CD8-positive, alpha-beta T cell (primary cell): ENCODE measurements at regions of chr9 and their contacts with region 1.

Region 1: DNA sequence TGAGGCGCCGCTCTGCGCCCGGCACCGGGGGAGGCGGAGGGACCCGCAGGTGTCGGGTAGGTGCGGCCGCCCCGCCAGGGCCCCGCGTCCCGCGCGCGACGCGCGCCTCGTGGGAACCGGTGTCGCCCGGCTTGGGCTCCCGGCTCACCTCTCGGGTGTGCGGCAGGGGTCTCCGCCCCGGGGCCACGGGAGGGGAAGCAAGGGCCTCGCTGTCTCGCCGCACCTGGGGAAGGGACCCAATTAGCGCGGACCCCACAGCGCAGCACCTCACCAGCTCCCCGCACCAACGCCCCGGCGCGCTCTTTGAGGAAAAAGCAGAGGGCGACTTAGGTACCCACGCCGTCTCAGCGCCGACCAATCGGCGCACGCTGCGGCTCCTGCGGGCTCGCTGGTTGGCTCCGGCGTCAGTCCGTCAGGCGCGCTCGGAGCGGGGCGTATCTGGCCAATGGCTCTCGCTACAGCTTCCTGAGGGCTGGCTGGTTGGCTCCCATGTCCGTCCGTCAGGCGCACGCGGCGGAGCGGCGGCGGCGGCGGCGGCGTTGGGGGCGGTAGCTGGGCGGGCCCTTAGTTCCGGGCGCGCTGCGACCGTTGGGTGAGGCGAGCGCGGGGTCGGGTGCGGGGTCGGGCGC is at the start of gene TRAF2:
- DNase-seq: peak; percentile 94 to 100 (median 97)
- ATAC-seq: peak; percentile 88
- H3K4me3 ChIP-seq: peak within 1 kb of the TSS; percentile 83 to 85
- H3K4me3 Mint-ChIP-seq: peak within 1 kb of the TSS; percentile 83
- H3K27ac ChIP-seq: peak within 1 kb of the TSS; percentile 53 to 92
- H3K27ac Mint-ChIP-seq: peak within 1 kb of the TSS; percentile 95
- H3K4me1 ChIP-seq: peaks cover 43% of the 10 kb centered on the region
- H3K4me1 Mint-ChIP-seq: peaks cover 36% of the 10 kb centered on the region
- H3K27me3 ChIP-seq: no peaks in the 10 kb centered on the region
- H3K27me3 Mint-ChIP-seq: no peaks in the 10 kb centered on the region
- CTCF ChIP-seq: no peak
- total RNA-seq, gene TRAF2: 7.1 to 11.8 TPM

Region 2: GRCh38 chr9:136799854-136800657 is 86.0 kb before region 1 on chr9:
- CTCF ChIA-PET with region 1: no interaction called
- POLR2A ChIA-PET with region 1: no interaction called
- intact Hi-C with region 1: no loop called
- DNase-seq: peak; percentile 73 to 96 (median 92)
- ATAC-seq: peak; percentile 83
- H3K4me3 ChIP-seq: peak overlapping the region; percentile 61 to 75
- H3K4me3 Mint-ChIP-seq: peak overlapping the region; percentile 82
- H3K27ac ChIP-seq: peak overlapping the region in 1 of 2 experiments; percentile 35
- H3K27ac Mint-ChIP-seq: peak overlapping the region; percentile 60
- H3K4me1 ChIP-seq: peaks cover 35% of the 10 kb centered on the region
- H3K4me1 Mint-ChIP-seq: peaks cover 29% of the 10 kb centered on the region
- H3K27me3 ChIP-seq: peaks cover 0 to 2% of the 10 kb centered on the region in 2 experiments
- H3K27me3 Mint-ChIP-seq: no peaks in the 10 kb centered on the region
- CTCF ChIP-seq: no peak

Region 3: DNA sequence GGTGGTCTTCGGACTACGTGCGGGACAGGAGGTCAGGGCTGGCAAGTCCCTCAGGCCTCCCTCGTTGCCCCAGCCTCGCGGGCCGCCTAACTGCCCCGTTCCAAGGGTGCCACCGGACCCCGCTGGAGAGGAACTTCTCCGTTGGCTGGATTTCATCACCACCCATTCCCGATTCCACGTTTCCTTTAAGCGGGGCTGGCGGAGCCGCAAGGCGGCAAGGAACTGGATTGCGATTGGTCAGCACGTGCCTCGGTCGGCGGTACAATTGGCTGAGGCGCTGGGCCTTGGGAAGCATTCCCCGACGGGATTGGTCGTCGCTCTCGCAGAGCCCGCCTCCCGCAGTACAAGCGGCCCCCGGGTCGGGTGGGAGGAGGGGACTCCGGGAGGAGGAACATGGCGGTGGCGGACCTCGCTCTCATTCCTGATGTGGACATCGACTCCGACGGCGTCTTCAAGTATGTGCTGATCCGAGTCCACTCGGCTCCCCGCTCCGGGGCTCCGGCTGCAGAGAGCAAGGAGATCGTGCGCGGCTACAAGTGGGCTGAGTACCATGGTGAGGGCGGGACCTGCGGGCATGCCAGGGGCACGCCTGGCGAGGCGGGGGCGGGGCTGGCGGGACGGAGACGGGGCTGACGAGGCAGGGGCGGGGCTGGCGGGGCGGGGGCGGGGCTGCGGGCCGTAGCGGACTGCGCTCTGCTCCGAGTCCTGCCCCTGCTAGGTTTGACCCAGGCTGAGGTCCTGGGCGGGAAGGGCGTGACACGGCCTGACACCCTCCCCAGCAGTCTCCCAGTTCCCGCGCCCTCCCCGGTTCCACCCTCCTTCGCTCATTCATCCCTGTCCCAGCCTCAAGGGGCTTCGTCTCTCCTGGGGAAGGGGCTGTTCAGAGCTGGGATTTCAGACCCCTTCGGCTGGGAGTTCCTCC is 36.8 kb before region 1 on chr9 and contains the start of gene PHPT1:
- CTCF ChIA-PET with region 1: interaction called, 7 read pairs
- POLR2A ChIA-PET with region 1: interaction called, 4 read pairs
- intact Hi-C with region 1: loop called (anchors 1 kb)
- DNase-seq: peak; percentile 91 to 98 (median 96)
- ATAC-seq: peak; percentile 92
- H3K4me3 ChIP-seq: peak within 1 kb of the TSS; percentile 77 to 99
- H3K4me3 Mint-ChIP-seq: peak within 1 kb of the TSS; percentile 93
- H3K27ac ChIP-seq: peak within 1 kb of the TSS; percentile 47 to 68
- H3K27ac Mint-ChIP-seq: peak within 1 kb of the TSS; percentile 88
- H3K4me1 ChIP-seq: peaks cover 29% of the 10 kb centered on the region
- H3K4me1 Mint-ChIP-seq: peaks cover 15% of the 10 kb centered on the region
- H3K27me3 ChIP-seq: peaks cover 3 to 11% of the 10 kb centered on the region in 2 experiments
- H3K27me3 Mint-ChIP-seq: peaks cover 9% of the 10 kb centered on the region
- CTCF ChIP-seq: no peak
- total RNA-seq, gene PHPT1: 15.7 to 17.1 TPM

Region 4: DNA sequence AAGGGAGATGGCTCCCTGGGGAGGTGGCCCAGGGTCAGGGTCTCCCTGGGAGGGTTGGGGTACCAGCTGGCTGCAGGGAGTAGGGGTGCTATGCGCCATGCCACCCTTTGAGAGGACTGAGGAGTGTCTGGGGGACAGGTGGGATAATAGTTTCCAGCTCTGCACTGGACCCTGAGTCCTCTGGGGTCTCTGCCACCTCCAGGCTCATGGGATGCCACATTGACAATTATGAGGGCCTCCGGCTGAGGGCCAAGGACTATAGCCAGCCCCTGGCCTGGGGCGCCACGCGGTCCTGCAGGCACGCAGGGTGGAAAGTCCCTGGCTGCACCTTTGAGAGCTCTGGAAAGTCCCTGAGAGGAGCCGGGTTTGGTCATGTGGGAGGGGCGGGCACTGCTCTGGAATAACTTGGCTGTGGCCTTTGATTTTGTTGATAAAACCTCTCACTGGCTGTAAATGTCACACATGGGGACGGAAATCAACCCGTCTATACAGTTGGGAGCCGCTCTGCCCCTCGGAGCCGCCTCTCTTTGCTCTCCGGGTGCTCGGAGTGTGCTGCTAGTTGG is 16.3 kb after region 1 on chr9:
- CTCF ChIA-PET with region 1: no interaction called
- POLR2A ChIA-PET with region 1: interaction called, 5 read pairs
- intact Hi-C with region 1: loop called (anchors 1 to 2 kb)
- DNase-seq: peak; percentile 51 to 94 (median 69)
- ATAC-seq: peak; percentile 83
- H3K4me3 ChIP-seq: peak overlapping the region in 1 of 2 experiments; percentile 24
- H3K4me3 Mint-ChIP-seq: peak overlapping the region; percentile 56
- H3K27ac ChIP-seq: peak overlapping the region; percentile 59 to 85
- H3K27ac Mint-ChIP-seq: peak overlapping the region; percentile 94
- H3K4me1 ChIP-seq: peaks cover 18% of the 10 kb centered on the region
- H3K4me1 Mint-ChIP-seq: peaks cover 22% of the 10 kb centered on the region
- H3K27me3 ChIP-seq: no peaks in the 10 kb centered on the region
- H3K27me3 Mint-ChIP-seq: no peaks in the 10 kb centered on the region
- CTCF ChIP-seq: no peak

Region 5: GRCh38 chr9:137000177-137000883 is 114.3 kb after region 1 on chr9:
- CTCF ChIA-PET with region 1: interaction called, 3 read pairs
- POLR2A ChIA-PET with region 1: no interaction called
- intact Hi-C with region 1: loop called in 1 of 2 experiments (anchors 1 kb)
- DNase-seq: peak in 2 of 9 experiments; percentile 65 to 80
- ATAC-seq: peak; percentile 32
- H3K4me3 ChIP-seq: peak overlapping the region in 1 of 2 experiments; percentile 18
- H3K4me3 Mint-ChIP-seq: peak overlapping the region; percentile 69
- H3K27ac ChIP-seq: peak overlapping the region; percentile 9 to 65
- H3K27ac Mint-ChIP-seq: peak overlapping the region; percentile 69
- H3K4me1 ChIP-seq: peaks cover 40% of the 10 kb centered on the region
- H3K4me1 Mint-ChIP-seq: peaks cover 39% of the 10 kb centered on the region
- H3K27me3 ChIP-seq: no peaks in the 10 kb centered on the region
- H3K27me3 Mint-ChIP-seq: no peaks in the 10 kb centered on the region
- CTCF ChIP-seq: no peak